CD4-positive, alpha-beta memory T cell (primary cell): ENCODE measurements at regions of chr2 and their contacts with region 1.

Region 1: DNA sequence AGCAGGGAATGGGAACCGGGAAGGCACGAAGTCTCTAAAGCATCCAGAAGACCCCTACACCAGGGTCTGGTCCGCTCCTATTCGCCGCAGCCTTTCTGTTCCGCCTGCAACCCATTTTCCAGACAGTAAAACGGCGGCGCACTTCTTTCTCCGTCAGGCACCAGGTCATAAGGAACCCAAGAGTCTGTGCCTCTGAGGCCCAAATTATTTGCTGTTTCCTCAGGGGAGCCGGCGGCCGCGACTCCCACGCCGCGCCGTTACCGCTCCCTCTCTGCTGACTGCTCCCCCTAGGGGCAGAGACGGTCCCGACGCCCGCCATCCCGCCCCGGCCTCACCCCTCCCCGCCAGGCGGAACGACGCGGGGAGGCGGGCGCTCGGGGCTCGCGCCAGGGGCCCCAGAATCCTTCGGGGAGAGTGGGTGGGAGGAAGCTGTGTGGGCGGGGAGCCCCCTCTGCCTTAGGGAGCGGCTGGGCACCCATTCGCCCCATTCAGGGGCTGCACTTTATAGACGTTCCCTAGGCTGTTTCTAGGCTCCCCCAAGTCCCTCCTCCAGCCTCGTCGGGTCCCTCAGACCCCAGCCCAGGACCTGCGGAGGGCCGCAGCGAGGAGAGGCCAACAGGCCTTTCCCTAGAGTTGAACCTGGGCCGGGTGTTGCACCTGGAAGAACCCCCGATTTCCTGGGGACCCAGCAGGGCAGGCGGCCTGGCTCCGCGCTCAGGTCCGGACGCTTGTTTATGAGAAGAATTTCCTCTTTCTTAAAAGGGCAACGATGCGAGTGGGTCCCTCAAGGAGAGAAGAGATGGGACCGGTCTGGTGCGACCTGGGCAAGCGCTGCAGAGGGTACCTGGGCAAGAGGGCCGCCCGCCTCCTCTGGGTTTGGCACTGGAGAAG is 3.6 kb upstream of the CTDSP1 start:
- DNase-seq: peak; percentile 95 to 98 (median 96)
- H3K4me3 ChIP-seq: peak overlapping the region; percentile 97 to 98
- H3K4me3 Mint-ChIP-seq: peak overlapping the region; percentile 88 to 95 (median 93)
- H3K27ac ChIP-seq: peak overlapping the region; percentile 89
- H3K27ac Mint-ChIP-seq: peak overlapping the region; percentile 99 to 100 (median 99)
- H3K4me1 ChIP-seq: peaks cover 49% of the 10 kb centered on the region
- H3K4me1 Mint-ChIP-seq: peaks cover 15 to 51% (median 36%) of the 10 kb centered on the region in 4 donors
- H3K27me3 ChIP-seq: no peaks in the 10 kb centered on the region
- H3K27me3 Mint-ChIP-seq: no peaks in the 10 kb centered on the region

Region 2: GRCh38 chr2:218286570-218287459 is 109.2 kb before region 1 on chr2:
- CTCF ChIA-PET with region 1: interaction called, 36 read pairs
- POLR2A ChIA-PET with region 1: interaction called, 139 read pairs
- intact Hi-C with region 1: loop called (anchors 1 kb)
- DNase-seq: peak; percentile 84 to 97 (median 87)
- H3K4me3 ChIP-seq: peak overlapping the region; percentile 53 to 86
- H3K4me3 Mint-ChIP-seq: peak overlapping the region; percentile 90 to 97 (median 91)
- H3K27ac ChIP-seq: peak overlapping the region; percentile 94
- H3K27ac Mint-ChIP-seq: peak overlapping the region; percentile 98 to 100 (median 99)
- H3K4me1 ChIP-seq: peaks cover 92% of the 10 kb centered on the region
- H3K4me1 Mint-ChIP-seq: peaks cover 55 to 95% (median 73%) of the 10 kb centered on the region in 4 donors
- H3K27me3 ChIP-seq: no peaks in the 10 kb centered on the region
- H3K27me3 Mint-ChIP-seq: no peaks in the 10 kb centered on the region

Region 3: GRCh38 chr2:218319813-218320365 is 76.2 kb before region 1 on chr2:
- CTCF ChIA-PET with region 1: no interaction called
- POLR2A ChIA-PET with region 1: interaction called, 17 read pairs
- intact Hi-C with region 1: no loop called
- DNase-seq: no peak
- H3K4me3 ChIP-seq: no peak overlapping the region
- H3K4me3 Mint-ChIP-seq: peak overlapping the region in 1 of 8 donors; percentile 46
- H3K27ac ChIP-seq: no peak overlapping the region
- H3K27ac Mint-ChIP-seq: peak overlapping the region in 2 of 7 donors; percentile 8 to 80
- H3K4me1 ChIP-seq: peaks cover 48% of the 10 kb centered on the region
- H3K4me1 Mint-ChIP-seq: peaks cover 33 to 69% (median 50%) of the 10 kb centered on the region in 4 donors
- H3K27me3 ChIP-seq: no peaks in the 10 kb centered on the region
- H3K27me3 Mint-ChIP-seq: no peaks in the 10 kb centered on the region

Region 4: DNA sequence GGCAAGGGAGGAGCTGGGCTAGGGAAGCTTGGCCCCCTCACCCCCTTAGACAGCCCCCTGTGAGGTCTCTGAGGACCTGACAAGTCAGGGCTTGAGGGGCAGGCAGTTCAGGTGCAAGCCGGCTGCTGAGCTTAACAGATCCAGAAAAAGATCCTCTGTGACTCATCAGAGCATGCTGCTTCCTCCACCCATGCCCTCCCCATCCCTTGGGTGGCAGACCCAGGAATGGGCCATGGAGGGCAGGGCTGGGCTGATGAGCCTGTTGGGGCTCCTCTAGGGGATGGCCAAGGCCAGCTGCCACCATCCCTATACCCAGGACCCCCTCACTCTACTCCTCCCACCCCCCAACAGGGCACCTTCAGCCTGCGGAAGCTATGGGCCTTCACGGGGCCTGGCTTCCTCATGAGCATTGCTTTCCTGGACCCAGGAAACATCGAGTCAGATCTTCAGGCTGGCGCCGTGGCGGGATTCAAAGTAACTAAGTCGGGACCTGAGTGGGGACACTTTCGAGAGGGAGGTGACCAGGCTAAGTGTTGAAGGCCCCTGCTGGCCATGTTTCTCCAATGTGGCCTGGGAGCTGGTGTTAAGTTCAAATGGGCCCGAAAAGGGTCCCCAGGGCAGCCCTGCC is 12.0 kb before region 1 on chr2:
- CTCF ChIA-PET with region 1: interaction called, 3 read pairs
- POLR2A ChIA-PET with region 1: interaction called, 13 read pairs
- intact Hi-C with region 1: no loop called
- DNase-seq: no peak
- H3K4me3 ChIP-seq: no peak overlapping the region
- H3K4me3 Mint-ChIP-seq: no peak overlapping the region
- H3K27ac ChIP-seq: no peak overlapping the region
- H3K27ac Mint-ChIP-seq: no peak overlapping the region
- H3K4me1 ChIP-seq: peaks cover 7% of the 10 kb centered on the region
- H3K4me1 Mint-ChIP-seq: peaks cover 2 to 11% (median 5%) of the 10 kb centered on the region in 4 donors
- H3K27me3 ChIP-seq: no peaks in the 10 kb centered on the region
- H3K27me3 Mint-ChIP-seq: peaks cover 2 to 3% of the 10 kb centered on the region in 2 donors

Region 5: DNA sequence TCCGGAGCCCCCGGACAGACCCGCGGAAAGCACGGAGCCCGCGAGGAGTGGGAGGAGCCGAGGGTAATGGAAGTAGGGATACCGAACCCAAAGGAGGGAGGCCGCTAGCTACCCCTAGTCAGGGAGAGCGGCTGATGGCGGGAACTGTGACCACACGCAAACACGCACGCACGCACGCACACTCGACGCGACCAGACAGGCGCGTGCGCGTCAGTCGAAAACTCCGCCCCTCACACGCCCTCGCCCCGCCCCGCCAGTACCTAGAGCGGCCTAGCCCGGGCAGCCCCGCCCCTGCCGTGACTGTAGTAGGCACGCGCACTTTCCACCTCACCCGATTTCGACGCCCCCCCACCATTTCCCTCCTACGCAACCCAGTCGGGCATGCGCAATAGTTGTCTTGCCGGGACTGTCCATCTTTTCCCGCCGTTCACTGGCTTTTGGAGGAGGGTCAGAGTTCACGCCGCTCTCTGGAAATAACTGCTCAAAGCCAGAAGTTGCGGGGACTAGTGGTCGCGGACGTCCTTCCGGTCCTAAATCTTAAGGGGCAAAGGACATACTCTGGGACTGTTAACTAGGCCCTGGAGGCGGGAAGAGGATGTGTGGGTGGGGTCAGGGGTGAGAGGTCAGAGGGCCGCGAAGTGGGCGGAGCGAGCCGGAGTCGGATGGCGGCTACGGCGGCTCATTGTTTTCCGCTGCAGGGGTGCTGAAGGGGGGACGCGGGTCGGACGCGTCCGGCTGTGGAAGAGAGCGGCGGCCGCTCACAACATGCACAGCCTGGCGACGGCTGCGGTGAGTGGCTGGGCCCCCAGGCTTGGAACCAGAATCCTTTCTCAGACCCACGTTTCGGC is 172.4 kb after region 1 on chr2 and contains the starts of genes CNOT9 and USP37:
- CTCF ChIA-PET with region 1: no interaction called
- POLR2A ChIA-PET with region 1: interaction called, 4 read pairs
- intact Hi-C with region 1: loop called (anchors 1 kb)
- DNase-seq: peak; percentile 99 to 100 (median 100)
- H3K4me3 ChIP-seq: peak within 1 kb of the TSS; percentile 67 to 84
- H3K4me3 Mint-ChIP-seq: peak within 1 kb of the TSS; percentile 90 to 99 (median 97)
- H3K27ac ChIP-seq: peak within 1 kb of the TSS; percentile 99
- H3K27ac Mint-ChIP-seq: peak within 1 kb of the TSS; percentile 96 to 100 (median 100)
- H3K4me1 ChIP-seq: peaks cover 43% of the 10 kb centered on the region
- H3K4me1 Mint-ChIP-seq: peaks cover 48 to 78% (median 57%) of the 10 kb centered on the region in 4 donors
- H3K27me3 ChIP-seq: no peaks in the 10 kb centered on the region
- H3K27me3 Mint-ChIP-seq: no peaks in the 10 kb centered on the region
- total RNA-seq, gene CNOT9: 53.9 to 58.0 TPM
- total RNA-seq, gene USP37: 28.2 to 29.1 TPM

Region 6: GRCh38 chr2:218898109-218898878 is 502.3 kb after region 1 on chr2:
- CTCF ChIA-PET with region 1: no interaction called
- POLR2A ChIA-PET with region 1: no interaction called
- intact Hi-C with region 1: loop called (anchors 5 kb)
- DNase-seq: peak; percentile 70 to 80 (median 71)
- H3K4me3 ChIP-seq: peak overlapping the region in 1 of 2 donors; percentile 64
- H3K4me3 Mint-ChIP-seq: peak overlapping the region; percentile 81 to 97 (median 84)
- H3K27ac ChIP-seq: peak overlapping the region; percentile 93
- H3K27ac Mint-ChIP-seq: peak overlapping the region; percentile 85 to 99 (median 95)
- H3K4me1 ChIP-seq: peaks cover 54% of the 10 kb centered on the region
- H3K4me1 Mint-ChIP-seq: peaks cover 33 to 49% (median 42%) of the 10 kb centered on the region in 4 donors
- H3K27me3 ChIP-seq: no peaks in the 10 kb centered on the region
- H3K27me3 Mint-ChIP-seq: peaks cover 8 to 17% of the 10 kb centered on the region in 2 donors